Sigmoid colon (tissue), 7 donors: ENCODE measurements at regions of chr17 and their contacts with region 1.

Region 1: DNA sequence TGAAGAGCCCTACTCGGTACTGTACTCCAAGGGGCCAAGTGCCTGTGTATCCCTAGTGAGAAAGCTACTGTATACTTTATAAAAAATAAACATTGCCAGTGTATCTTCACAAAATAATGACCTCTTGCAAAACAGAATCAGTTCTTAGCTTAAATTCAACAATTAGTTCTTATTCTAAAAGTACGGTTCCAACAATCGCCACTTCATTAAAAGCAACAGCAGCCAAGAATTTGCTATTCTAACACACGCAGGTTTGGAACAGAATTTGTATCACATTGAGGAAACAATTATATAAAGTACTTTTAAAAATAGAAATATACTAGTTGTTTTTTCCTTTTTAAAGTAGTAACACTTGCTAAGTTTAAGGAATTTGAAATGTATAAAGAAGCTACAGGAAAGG is 48.5 kb downstream of the CEP95 start:
- DNase-seq: no peak
- H3K4me3 ChIP-seq: no peak overlapping the region
- H3K27ac ChIP-seq: no peak overlapping the region
- H3K4me1 ChIP-seq: no peaks in the 10 kb centered on the region
- H3K27me3 ChIP-seq: no peaks in the 10 kb centered on the region
- CTCF ChIP-seq: no peak
- EP300 ChIP-seq: no peak
- POLR2A ChIP-seq: no peak

Region 2: GRCh38 chr17:64515419-64515818 is 39.9 kb before region 1 on chr17:
- intact Hi-C with region 1: loop called (anchors 5 kb)
- DNase-seq: no peak
- H3K4me3 ChIP-seq: no peak overlapping the region
- H3K27ac ChIP-seq: no peak overlapping the region
- H3K4me1 ChIP-seq: no peaks in the 10 kb centered on the region
- H3K27me3 ChIP-seq: no peaks in the 10 kb centered on the region
- CTCF ChIP-seq: no peak
- EP300 ChIP-seq: no peak
- POLR2A ChIP-seq: no peak

Region 3: GRCh38 chr17:64534175-64534574 is 21.1 kb before region 1 on chr17:
- intact Hi-C with region 1: no loop called
- DNase-seq: no peak
- H3K4me3 ChIP-seq: no peak overlapping the region
- H3K27ac ChIP-seq: no peak overlapping the region
- H3K4me1 ChIP-seq: no peaks in the 10 kb centered on the region
- H3K27me3 ChIP-seq: no peaks in the 10 kb centered on the region
- CTCF ChIP-seq: no peak
- EP300 ChIP-seq: no peak
- POLR2A ChIP-seq: no peak